ENCODE measurements at regions of chr9 and their contacts with region 1.

Region 1: GRCh38 chr9:127916665-127917613 is at the start of gene ST6GALNAC4:
- DNase-seq: peak; percentile 98
- ATAC-seq: peak; percentile 96
- H3K4me3 Mint-ChIP-seq: peak within 1 kb of the TSS; percentile 76
- H3K27ac Mint-ChIP-seq: peak within 1 kb of the TSS; percentile 69
- H3K4me1 Mint-ChIP-seq: peaks cover 47% of the 10 kb centered on the region
- H3K27me3 Mint-ChIP-seq: no peaks in the 10 kb centered on the region
- total RNA-seq, gene ST6GALNAC4: 14.9 to 20.7 TPM

Region 2: GRCh38 chr9:127568971-127569885 is 347.7 kb before region 1 on chr9:
- CTCF ChIA-PET with region 1: no interaction called
- POLR2A ChIA-PET with region 1: no interaction called
- intact Hi-C with region 1: loop called in 1 of 2 experiments (anchors 1 kb)
- DNase-seq: peak; percentile 88
- ATAC-seq: peak; percentile 85
- H3K4me3 Mint-ChIP-seq: peak overlapping the region; percentile 71
- H3K27ac Mint-ChIP-seq: peak overlapping the region; percentile 38
- H3K4me1 Mint-ChIP-seq: peaks cover 26% of the 10 kb centered on the region
- H3K27me3 Mint-ChIP-seq: no peaks in the 10 kb centered on the region

Region 3: DNA sequence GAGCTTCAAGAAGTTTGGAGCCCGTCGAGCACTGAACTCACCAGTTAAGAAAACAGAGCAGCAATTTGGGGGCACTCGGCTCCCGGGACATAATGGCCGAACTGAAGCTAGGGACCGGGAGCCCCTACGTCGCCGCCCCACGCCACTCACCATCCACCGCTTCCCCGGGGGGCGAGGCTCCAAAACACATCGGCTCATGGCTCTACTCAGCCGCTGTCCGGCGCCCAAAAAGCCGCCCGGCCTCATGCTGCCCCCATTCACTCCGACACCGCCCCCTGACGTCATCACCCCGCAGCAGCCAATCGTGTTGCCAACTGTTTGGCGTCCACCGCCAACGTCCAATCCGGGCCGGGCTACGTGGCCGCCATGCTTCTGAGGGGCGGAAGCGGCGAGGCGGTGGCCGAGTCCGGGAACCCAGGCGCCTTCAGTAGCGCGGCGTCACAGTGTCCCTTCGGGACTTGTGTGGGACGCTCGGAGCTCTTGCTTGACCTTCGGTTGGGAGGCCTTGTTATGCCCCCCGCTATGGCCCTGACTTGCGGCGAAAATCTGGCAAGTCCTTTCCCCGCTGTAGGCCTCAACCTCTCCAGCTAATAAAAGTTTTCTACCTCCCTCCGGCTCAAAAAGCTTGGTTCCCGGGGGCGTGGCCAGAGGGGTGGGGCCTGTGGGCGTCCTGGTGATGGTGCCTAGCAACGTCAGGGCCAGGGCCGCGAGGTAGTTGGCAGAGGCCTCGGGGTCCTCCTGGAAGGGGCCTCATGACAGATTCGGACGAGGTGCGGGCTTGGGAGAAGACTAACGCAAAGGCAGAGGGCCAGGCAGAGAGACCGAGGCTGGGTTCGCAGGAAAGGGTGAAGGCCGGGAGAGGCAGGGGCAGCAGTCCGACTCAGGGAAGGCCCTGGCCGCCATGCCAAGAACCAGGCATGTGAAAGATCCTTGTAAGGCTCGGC is 201.3 kb before region 1 on chr9 and contains the starts of genes PTRH1 and TTC16:
- CTCF ChIA-PET with region 1: interaction called, 4 read pairs
- POLR2A ChIA-PET with region 1: no interaction called
- intact Hi-C with region 1: loop called in 1 of 2 experiments (anchors 1 kb)
- DNase-seq: peak; percentile 99
- ATAC-seq: peak; percentile 97
- H3K4me3 Mint-ChIP-seq: peak within 1 kb of the TSS; percentile 92
- H3K27ac Mint-ChIP-seq: peak within 1 kb of the TSS; percentile 97
- H3K4me1 Mint-ChIP-seq: peaks cover 25% of the 10 kb centered on the region
- H3K27me3 Mint-ChIP-seq: no peaks in the 10 kb centered on the region
- total RNA-seq, gene PTRH1: 12.9 to 15.1 TPM
- total RNA-seq, gene TTC16: 0.16 to 0.30 TPM

Region 4: DNA sequence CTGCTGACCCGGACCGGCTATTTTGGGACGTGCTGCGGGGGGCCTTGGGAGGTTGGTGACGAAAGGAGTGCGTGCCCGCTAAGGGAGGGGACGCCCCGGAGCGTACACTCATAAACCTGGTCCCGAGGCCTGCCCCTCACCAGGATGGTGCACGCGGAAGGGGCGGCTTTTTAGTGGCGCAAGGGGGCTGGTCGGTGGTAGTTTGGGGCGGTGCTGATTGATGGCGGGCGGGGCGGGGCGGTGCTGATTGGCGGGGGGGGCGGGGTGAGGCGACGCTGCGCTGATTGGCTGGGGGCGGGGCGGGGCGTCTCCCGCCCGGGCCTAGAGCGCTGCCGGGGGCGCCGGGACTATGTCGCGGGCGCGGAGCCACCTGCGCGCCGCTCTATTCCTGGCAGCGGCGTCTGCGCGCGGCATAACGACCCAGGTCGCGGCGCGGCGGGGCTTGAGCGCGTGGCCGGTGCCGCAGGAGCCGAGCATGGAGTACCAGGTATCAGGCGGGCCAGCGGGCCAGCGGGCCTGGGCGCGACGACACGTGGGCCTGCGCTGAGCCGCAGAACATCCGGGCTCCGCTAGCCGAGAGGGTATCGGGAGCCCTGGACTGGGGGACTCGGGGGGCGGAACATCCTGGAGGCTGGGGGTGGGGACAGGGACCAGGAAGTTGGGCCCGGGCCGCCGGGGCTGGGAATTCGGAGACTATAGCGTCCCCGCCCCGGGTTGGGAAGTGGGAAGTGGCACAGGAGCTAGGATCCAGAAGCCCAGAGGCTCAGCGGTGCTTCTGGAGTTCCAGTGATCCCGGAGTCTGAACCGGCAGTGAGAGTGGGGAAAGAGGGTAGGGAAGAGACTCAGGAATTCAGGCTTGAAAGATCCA is 114.1 kb before region 1 on chr9 and contains the start of gene FPGS:
- CTCF ChIA-PET with region 1: interaction called, 3 read pairs
- POLR2A ChIA-PET with region 1: no interaction called
- intact Hi-C with region 1: loop called (anchors 1 to 5 kb)
- DNase-seq: peak; percentile 93
- ATAC-seq: peak; percentile 86
- H3K4me3 Mint-ChIP-seq: peak within 1 kb of the TSS; percentile 98
- H3K27ac Mint-ChIP-seq: peak within 1 kb of the TSS; percentile 95
- H3K4me1 Mint-ChIP-seq: peaks cover 26% of the 10 kb centered on the region
- H3K27me3 Mint-ChIP-seq: no peaks in the 10 kb centered on the region
- total RNA-seq, gene FPGS: 71.9 to 80.4 TPM

Region 5: DNA sequence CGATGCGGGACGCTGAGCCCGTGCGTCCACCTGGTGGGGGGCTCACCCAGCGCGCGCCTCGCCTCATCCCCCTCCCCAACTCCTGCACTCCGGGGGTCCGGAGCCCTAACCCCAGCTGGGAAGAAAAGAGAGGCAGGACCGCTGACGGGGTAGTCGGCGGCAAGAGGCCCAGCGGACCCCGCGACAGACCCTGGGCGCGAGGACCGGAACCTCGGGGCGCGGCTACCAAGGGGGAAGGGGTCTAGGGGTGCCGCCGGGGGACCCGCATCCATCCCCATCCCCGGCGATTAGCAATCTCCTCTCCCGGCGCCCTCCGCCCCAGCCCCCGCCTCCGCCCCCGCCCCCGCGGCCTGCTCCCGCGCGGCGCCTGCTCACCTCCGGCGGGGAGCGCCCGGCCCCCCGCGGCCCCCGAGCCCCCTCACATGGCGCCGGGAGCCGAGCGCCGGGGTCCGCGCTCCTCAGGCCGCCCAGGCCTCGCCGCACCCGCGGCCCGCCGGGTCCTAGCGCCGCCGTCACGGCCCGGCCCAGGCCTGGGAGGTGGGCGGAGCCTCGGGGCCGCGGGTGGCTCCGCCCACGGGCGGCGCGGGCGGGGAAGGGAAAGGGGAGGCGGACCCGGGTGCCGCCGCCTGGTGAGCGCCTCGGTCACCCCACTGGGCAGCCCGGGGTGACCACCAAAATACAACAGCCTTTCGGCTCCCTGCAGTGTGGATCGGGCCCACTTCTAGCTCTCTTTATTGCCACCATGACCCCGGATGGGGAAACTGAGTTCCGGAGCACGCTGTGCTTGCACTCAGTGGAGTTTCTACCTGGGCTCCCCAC is 17.6 kb before region 1 on chr9 and contains the start of gene ST6GALNAC6:
- CTCF ChIA-PET with region 1: interaction called, 8 read pairs
- POLR2A ChIA-PET with region 1: interaction called, 7 read pairs
- intact Hi-C with region 1: loop called (anchors 1 to 2 kb)
- DNase-seq: peak; percentile 85
- ATAC-seq: peak; percentile 69
- H3K4me3 Mint-ChIP-seq: peak within 1 kb of the TSS; percentile 82
- H3K27ac Mint-ChIP-seq: peak within 1 kb of the TSS; percentile 87
- H3K4me1 Mint-ChIP-seq: peaks cover 35% of the 10 kb centered on the region
- H3K27me3 Mint-ChIP-seq: no peaks in the 10 kb centered on the region
- total RNA-seq, gene ST6GALNAC6: 46.3 to 63.3 TPM

Measured in activated CD4-positive, alpha-beta T cell treated with anti-CD3 and anti-CD28 coated beads for 36 hours (primary cell).